ENCODE measurements at regions of chr1 and their contacts with region 1.

Region 1: DNA sequence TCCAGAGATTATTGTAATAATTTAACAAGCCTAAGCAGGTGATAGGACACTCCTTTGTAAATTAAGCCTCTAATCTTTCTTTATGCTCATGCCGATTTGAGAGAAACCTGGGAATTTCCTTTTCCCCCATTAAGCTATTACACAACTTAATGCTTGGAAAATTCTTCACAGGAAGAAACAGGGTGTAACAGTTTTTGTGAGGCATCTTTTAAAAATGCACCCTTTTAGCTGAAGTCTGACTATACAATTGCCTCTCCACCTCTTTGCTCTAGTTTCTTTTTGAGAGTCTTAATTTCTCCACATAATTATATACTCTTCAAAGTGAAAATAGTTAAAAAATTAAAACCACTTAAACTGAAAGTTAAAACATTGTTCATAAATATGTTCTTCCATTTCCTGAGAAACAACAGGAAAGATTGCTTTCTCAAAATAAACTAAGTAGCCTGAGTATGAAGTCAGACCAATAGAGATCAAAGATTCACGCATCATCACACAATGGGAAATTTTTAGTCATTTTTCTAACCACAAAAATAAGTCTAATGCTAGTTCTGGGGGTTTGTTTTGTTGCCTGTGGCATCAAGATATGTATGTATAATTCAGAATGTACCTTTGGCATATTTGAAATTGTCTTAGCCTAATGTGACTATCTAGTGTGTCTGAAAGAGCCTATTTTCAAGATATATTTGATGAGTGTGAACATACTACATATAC is 34.7 kb downstream of the LRRC8D start:
- DNase-seq: peak in 4 of 14 experiments; percentile 14 to 83 (median 77)
- ATAC-seq: peak; percentile 82
- H3K4me3 ChIP-seq: peak overlapping the region; percentile 17
- H3K4me3 Mint-ChIP-seq: no peak overlapping the region
- H3K27ac ChIP-seq: peak overlapping the region; percentile 71 to 88
- H3K27ac Mint-ChIP-seq: no peak overlapping the region
- H3K4me1 ChIP-seq: peaks cover 14% of the 10 kb centered on the region
- H3K4me1 Mint-ChIP-seq: peaks cover 14% of the 10 kb centered on the region
- H3K27me3 ChIP-seq: no peaks in the 10 kb centered on the region
- H3K27me3 Mint-ChIP-seq: no peaks in the 10 kb centered on the region
- CTCF ChIP-seq: no peak

Region 2: GRCh38 chr1:89865498-89866385 is 10.2 kb after region 1 on chr1:
- CTCF ChIA-PET with region 1: no interaction called
- POLR2A ChIA-PET with region 1: interaction called, 4 read pairs
- intact Hi-C with region 1: loop called in 1 of 2 experiments (anchors 1 kb)
- DNase-seq: no peak
- ATAC-seq: peak; percentile 20
- H3K4me3 ChIP-seq: no peak overlapping the region
- H3K4me3 Mint-ChIP-seq: no peak overlapping the region
- H3K27ac ChIP-seq: no peak overlapping the region
- H3K27ac Mint-ChIP-seq: peak overlapping the region; percentile 57
- H3K4me1 ChIP-seq: peaks cover 15% of the 10 kb centered on the region
- H3K4me1 Mint-ChIP-seq: peaks cover 88% of the 10 kb centered on the region
- H3K27me3 ChIP-seq: no peaks in the 10 kb centered on the region
- H3K27me3 Mint-ChIP-seq: no peaks in the 10 kb centered on the region
- CTCF ChIP-seq: no peak

Region 3: DNA sequence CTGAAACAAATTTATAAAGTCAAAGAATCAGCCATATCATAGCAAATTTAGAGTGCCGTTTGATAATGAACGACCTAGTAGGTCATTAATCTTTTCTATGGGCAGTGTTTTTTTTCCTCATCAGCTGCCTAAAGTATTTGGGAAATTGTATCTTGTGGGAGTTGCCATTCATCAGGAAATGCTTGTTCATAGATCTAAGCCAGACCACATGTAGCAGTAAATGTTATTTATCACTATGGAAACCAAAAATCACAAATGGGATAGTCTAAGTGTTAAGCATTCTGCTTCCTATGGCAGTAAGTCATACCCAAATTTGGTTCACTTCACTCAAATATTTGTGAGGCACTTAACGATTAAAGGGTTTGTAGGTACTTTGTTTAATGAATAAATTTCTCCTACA is 18.2 kb after region 1 on chr1:
- CTCF ChIA-PET with region 1: interaction called, 3 read pairs
- POLR2A ChIA-PET with region 1: interaction called, 4 read pairs
- intact Hi-C with region 1: loop called in 1 of 2 experiments (anchors 1 kb)
- DNase-seq: peak in 3 of 14 experiments; percentile 47 to 55 (median 52)
- ATAC-seq: peak; percentile 35
- H3K4me3 ChIP-seq: no peak overlapping the region
- H3K4me3 Mint-ChIP-seq: peak overlapping the region; percentile 14
- H3K27ac ChIP-seq: no peak overlapping the region
- H3K27ac Mint-ChIP-seq: peak overlapping the region; percentile 80
- H3K4me1 ChIP-seq: peaks cover 13% of the 10 kb centered on the region
- H3K4me1 Mint-ChIP-seq: peaks cover 79% of the 10 kb centered on the region
- H3K27me3 ChIP-seq: no peaks in the 10 kb centered on the region
- H3K27me3 Mint-ChIP-seq: no peaks in the 10 kb centered on the region
- CTCF ChIP-seq: no peak